Activated CD4-positive, alpha-beta T cell treated with anti-CD3 and anti-CD28 coated beads, Interleukin-2, amount 10 ng/mL, durations not matched to agents 7 days and 5 days (primary cell): ENCODE measurements at regions of chr6 and their contacts with region 1.

Region 1: GRCh38 chr6:42928986-42929820 is at the start of gene CNPY3:
- DNase-seq: peak; percentile 98
- H3K4me3 Mint-ChIP-seq: peak within 1 kb of the TSS; percentile 98
- H3K27ac Mint-ChIP-seq: peak within 1 kb of the TSS; percentile 99
- H3K4me1 Mint-ChIP-seq: peaks cover 40% of the 10 kb centered on the region
- H3K27me3 Mint-ChIP-seq: no peaks in the 10 kb centered on the region
- total RNA-seq, gene CNPY3: 69.7 to 75.0 TPM

Region 2: GRCh38 chr6:42978839-42979522 is 49.8 kb after region 1 on chr6 and contains the start of gene PEX6:
- CTCF ChIA-PET with region 1: interaction called, 5 read pairs
- POLR2A ChIA-PET with region 1: interaction called, 13 read pairs
- DNase-seq: peak; percentile 99
- H3K4me3 Mint-ChIP-seq: peak within 1 kb of the TSS; percentile 89
- H3K27ac Mint-ChIP-seq: peak within 1 kb of the TSS; percentile 98
- H3K4me1 Mint-ChIP-seq: peaks cover 48% of the 10 kb centered on the region
- H3K27me3 Mint-ChIP-seq: no peaks in the 10 kb centered on the region
- total RNA-seq, gene PEX6: 18.7 to 21.3 TPM

Region 3: DNA sequence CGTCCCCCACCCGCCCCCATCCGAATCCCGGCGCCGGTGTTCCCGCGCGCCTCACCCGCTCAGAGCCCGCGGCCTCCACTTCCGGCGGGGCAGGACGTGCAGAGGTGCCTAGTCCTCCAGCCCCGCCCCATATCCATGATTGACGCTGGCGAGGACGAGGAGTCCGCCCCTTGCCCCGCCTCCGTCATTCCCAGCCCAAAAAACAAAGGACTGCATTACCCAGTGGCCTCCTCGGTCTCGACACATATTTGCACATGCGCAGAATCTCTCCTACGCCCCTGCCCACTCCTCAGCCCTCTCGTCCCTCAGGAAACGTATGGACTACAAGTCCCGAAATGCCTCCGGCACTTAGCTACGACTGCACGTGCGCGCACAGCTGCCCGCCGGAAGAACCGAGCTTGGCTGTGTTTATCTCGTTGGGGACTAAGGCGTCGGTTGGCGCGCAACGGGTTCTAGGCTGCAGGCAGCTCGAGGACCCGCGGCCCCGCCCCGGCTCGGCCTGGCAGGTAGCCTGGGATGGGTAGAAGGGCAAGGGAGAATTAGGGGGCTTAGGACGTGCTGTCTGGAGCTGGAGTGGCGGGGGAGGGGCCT is 84.7 kb after region 1 on chr6 and contains the starts of genes KLHDC3 and MEA1:
- CTCF ChIA-PET with region 1: interaction called, 4 read pairs
- POLR2A ChIA-PET with region 1: interaction called, 12 read pairs
- DNase-seq: peak; percentile 100
- H3K4me3 Mint-ChIP-seq: peak within 1 kb of the TSS; percentile 95
- H3K27ac Mint-ChIP-seq: peak within 1 kb of the TSS; percentile 86
- H3K4me1 Mint-ChIP-seq: peaks cover 48% of the 10 kb centered on the region
- H3K27me3 Mint-ChIP-seq: no peaks in the 10 kb centered on the region
- total RNA-seq, gene KLHDC3: 64.7 to 74.2 TPM
- total RNA-seq, gene MEA1: 58.9 to 70.1 TPM